B cell (primary cell): ENCODE measurements at regions of chr6 and their contacts with region 1.

Region 1: DNA sequence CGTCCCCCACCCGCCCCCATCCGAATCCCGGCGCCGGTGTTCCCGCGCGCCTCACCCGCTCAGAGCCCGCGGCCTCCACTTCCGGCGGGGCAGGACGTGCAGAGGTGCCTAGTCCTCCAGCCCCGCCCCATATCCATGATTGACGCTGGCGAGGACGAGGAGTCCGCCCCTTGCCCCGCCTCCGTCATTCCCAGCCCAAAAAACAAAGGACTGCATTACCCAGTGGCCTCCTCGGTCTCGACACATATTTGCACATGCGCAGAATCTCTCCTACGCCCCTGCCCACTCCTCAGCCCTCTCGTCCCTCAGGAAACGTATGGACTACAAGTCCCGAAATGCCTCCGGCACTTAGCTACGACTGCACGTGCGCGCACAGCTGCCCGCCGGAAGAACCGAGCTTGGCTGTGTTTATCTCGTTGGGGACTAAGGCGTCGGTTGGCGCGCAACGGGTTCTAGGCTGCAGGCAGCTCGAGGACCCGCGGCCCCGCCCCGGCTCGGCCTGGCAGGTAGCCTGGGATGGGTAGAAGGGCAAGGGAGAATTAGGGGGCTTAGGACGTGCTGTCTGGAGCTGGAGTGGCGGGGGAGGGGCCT is at the starts of genes KLHDC3 and MEA1:
- DNase-seq: peak; percentile 99
- ATAC-seq: peak; percentile 97
- H3K4me3 ChIP-seq: peak within 1 kb of the TSS; percentile 61 to 79 (median 70)
- H3K4me3 Mint-ChIP-seq: peak within 1 kb of the TSS; percentile 91
- H3K27ac ChIP-seq: peak within 1 kb of the TSS; percentile 35 to 69
- H3K27ac Mint-ChIP-seq: peak within 1 kb of the TSS; percentile 96
- H3K4me1 ChIP-seq: peaks cover 20 to 23% of the 10 kb centered on the region in 2 donors
- H3K4me1 Mint-ChIP-seq: peaks cover 50% of the 10 kb centered on the region
- H3K27me3 ChIP-seq: no peaks in the 10 kb centered on the region
- H3K27me3 Mint-ChIP-seq: no peaks in the 10 kb centered on the region
- CTCF ChIP-seq: no peak
- total RNA-seq, gene KLHDC3: 50.7 and 52.2 TPM in 2 replicates
- total RNA-seq, gene MEA1: 32.5 and 35.7 TPM in 2 replicates

Region 2: DNA sequence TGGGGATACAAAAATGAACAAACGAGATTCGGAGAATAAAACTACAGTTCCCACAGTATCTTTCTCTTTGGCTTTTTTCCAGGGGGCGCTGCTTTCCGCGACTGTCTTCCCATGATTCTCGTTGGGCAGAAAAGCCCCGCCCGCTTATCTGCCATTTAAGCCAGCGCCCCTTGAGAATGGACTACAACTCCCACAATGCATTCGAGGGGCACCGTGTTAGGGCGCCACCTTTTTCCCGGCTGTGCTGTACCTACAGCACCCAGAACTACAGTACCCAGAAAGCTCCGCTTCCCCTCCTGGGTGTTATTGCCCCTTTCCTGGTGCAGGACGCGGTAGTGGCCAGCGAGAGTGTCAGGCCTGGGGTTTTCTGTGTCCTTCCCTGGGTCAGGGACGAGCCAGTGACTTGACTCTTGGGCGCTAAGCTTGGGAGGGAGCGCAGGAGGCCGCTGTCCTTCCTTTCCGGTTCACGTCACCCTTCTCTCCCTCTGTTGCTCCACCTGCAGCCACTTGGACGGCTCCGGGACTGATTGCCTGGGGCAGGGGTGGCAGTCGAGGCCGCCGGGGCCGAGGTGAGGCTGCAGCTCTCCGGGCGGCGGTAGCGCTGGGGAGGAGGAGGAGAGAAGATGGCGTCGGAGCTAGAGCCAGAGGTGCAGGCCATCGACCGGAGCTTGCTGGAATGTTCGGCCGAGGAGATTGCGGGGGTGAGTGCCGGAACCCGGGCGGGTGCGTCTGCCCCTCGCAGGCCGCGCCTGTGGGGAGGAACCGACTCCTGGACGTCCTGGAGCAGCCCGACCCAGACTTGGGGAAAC is 450.0 kb before region 1 on chr6 and contains the start of gene UBR2:
- CTCF ChIA-PET with region 1: interaction called, 3 read pairs
- POLR2A ChIA-PET with region 1: interaction called, 3 read pairs
- intact Hi-C with region 1: loop called (anchors 1 kb)
- DNase-seq: peak; percentile 95
- ATAC-seq: peak; percentile 96
- H3K4me3 ChIP-seq: peak within 1 kb of the TSS; percentile 78 to 98 (median 91)
- H3K4me3 Mint-ChIP-seq: peak within 1 kb of the TSS; percentile 98
- H3K27ac ChIP-seq: peak within 1 kb of the TSS; percentile 90 to 91
- H3K27ac Mint-ChIP-seq: peak within 1 kb of the TSS; percentile 98
- H3K4me1 ChIP-seq: peaks cover 19 to 25% of the 10 kb centered on the region in 2 donors
- H3K4me1 Mint-ChIP-seq: peaks cover 36% of the 10 kb centered on the region
- H3K27me3 ChIP-seq: no peaks in the 10 kb centered on the region
- H3K27me3 Mint-ChIP-seq: no peaks in the 10 kb centered on the region
- CTCF ChIP-seq: peak; percentile 41
- total RNA-seq, gene UBR2: 56.2 and 61.5 TPM in 2 replicates

Region 3: GRCh38 chr6:42796171-42796570 is 217.8 kb before region 1 on chr6:
- CTCF ChIA-PET with region 1: no interaction called
- POLR2A ChIA-PET with region 1: no interaction called
- intact Hi-C with region 1: no loop called
- DNase-seq: no peak
- ATAC-seq: no peak
- H3K4me3 ChIP-seq: no peak overlapping the region
- H3K4me3 Mint-ChIP-seq: no peak overlapping the region
- H3K27ac ChIP-seq: no peak overlapping the region
- H3K27ac Mint-ChIP-seq: peak overlapping the region; percentile 11
- H3K4me1 ChIP-seq: peaks cover 0 to 3% of the 10 kb centered on the region in 2 donors
- H3K4me1 Mint-ChIP-seq: peaks cover 16% of the 10 kb centered on the region
- H3K27me3 ChIP-seq: no peaks in the 10 kb centered on the region
- H3K27me3 Mint-ChIP-seq: no peaks in the 10 kb centered on the region
- CTCF ChIP-seq: no peak

Region 4: DNA sequence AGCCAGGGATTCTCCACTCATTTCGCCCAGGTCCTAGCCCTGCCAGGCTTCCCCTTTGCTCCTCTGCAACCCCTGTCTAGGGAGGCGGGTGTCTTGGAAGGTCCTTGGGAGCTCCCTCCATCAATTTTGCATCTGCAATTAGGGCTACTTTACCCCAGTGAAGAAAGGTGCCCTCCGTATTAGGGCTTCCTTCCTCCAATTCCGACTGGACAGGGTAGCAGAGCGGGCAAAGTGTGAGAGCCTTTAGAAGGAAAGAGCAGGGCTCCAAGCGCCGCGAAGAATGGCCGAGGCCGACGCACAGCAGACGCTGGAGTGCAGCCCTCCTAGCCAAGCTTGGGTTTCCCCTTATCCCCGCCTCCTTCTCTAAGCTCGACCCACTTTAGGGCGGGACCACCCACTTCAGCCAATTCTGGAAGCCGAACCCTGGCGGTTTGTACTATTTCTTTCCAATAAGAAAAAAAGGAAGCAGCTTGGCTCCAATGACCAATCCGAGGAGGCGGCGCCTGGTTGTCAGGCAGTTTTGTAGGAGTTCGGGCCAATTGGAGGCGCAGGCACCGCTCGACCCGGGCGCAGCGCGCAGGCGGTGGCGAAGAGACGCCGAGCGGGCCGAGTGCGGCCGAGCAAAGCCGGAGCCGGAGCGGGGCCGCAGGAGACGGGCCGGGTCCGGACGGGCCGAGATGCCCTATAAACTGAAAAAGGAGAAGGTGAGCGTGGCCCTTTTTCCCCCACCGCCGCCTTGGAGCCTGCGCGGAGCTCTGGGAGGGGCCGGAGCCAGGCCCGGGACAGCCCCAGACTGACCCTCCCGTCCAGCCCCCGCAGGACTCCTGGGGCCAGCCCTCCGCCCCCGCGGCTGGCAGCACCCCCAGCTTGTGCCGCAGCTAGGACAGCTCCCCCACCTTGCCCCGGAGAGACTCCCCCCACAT is 29.7 kb before region 1 on chr6 and contains the start of gene PPP2R5D:
- CTCF ChIA-PET with region 1: interaction called, 6 read pairs
- POLR2A ChIA-PET with region 1: interaction called, 14 read pairs
- intact Hi-C with region 1: loop called (anchors 1 kb)
- DNase-seq: peak; percentile 98
- ATAC-seq: peak; percentile 95
- H3K4me3 ChIP-seq: peak within 1 kb of the TSS; percentile 54 to 96 (median 91)
- H3K4me3 Mint-ChIP-seq: peak within 1 kb of the TSS; percentile 89
- H3K27ac ChIP-seq: peak within 1 kb of the TSS; percentile 74 to 86
- H3K27ac Mint-ChIP-seq: peak within 1 kb of the TSS; percentile 95
- H3K4me1 ChIP-seq: peaks cover 18 to 30% of the 10 kb centered on the region in 2 donors
- H3K4me1 Mint-ChIP-seq: peaks cover 49% of the 10 kb centered on the region
- H3K27me3 ChIP-seq: no peaks in the 10 kb centered on the region
- H3K27me3 Mint-ChIP-seq: no peaks in the 10 kb centered on the region
- CTCF ChIP-seq: no peak
- total RNA-seq, gene PPP2R5D: 23.6 and 26.3 TPM in 2 replicates

Region 5: DNA sequence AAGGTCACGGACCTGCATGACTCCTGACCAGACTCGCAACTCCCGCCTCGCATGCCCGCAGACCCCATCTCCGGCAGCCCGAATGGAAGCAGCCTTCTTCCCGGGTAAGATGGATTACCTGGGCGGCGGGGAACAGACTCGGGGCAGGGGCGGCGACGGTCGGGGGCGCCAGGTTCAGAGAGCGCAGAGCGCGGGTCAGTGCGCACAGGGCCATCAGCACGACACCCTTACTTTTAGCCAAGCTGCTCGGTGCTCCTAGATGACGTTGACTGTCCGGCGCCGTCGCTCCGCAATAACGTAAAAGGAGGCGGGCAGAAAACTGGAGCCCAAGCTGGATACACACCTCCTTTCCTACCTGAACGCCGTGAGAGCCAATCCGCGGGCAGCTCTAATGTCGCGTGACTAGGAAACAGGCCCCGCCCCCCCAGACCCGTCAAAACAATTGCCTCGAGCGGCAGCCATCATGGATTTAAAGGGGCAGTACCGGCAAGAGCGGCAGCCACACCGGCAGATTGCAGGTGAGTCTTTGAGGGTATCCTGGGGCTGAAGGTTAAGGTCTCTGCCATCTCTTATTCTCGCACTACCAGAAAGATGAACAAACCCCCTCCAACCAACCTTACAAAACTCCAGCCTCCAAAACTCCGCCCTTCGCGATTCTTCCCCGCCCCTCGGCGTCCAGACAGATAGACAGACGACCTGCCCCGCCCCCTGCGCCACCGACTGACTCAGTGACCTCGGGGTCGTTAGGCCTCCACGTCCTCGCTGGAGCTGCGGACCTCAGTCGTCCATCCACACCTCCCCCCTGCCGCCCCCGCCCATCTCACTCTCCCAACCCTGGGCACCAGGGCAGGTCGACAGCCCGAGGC is 45.5 kb after region 1 on chr6 and contains the starts of genes KLC4 and MRPL2:
- CTCF ChIA-PET with region 1: interaction called, 5 read pairs
- POLR2A ChIA-PET with region 1: interaction called, 9 read pairs
- intact Hi-C with region 1: loop called (anchors 1 kb)
- DNase-seq: peak; percentile 98
- ATAC-seq: peak; percentile 96
- H3K4me3 ChIP-seq: peak within 1 kb of the TSS; percentile 76 to 96 (median 89)
- H3K4me3 Mint-ChIP-seq: peak within 1 kb of the TSS; percentile 99
- H3K27ac ChIP-seq: peak within 1 kb of the TSS; percentile 76 to 86
- H3K27ac Mint-ChIP-seq: peak within 1 kb of the TSS; percentile 100
- H3K4me1 ChIP-seq: peaks cover 17 to 23% of the 10 kb centered on the region in 2 donors
- H3K4me1 Mint-ChIP-seq: peaks cover 38% of the 10 kb centered on the region
- H3K27me3 ChIP-seq: no peaks in the 10 kb centered on the region
- H3K27me3 Mint-ChIP-seq: no peaks in the 10 kb centered on the region
- CTCF ChIP-seq: no peak
- total RNA-seq, gene KLC4: 52.7 and 61.9 TPM in 2 replicates
- total RNA-seq, gene MRPL2: 43.8 and 45.6 TPM in 2 replicates

Region 6: GRCh38 chr6:43247113-43247999 is 233.4 kb after region 1 on chr6:
- CTCF ChIA-PET with region 1: no interaction called
- POLR2A ChIA-PET with region 1: no interaction called
- intact Hi-C with region 1: loop called (anchors 1 kb)
- DNase-seq: peak; percentile 87
- ATAC-seq: peak; percentile 96
- H3K4me3 ChIP-seq: peak overlapping the region; percentile 51 to 85 (median 72)
- H3K4me3 Mint-ChIP-seq: no peak overlapping the region
- H3K27ac ChIP-seq: peak overlapping the region; percentile 51 to 65
- H3K27ac Mint-ChIP-seq: peak overlapping the region; percentile 87
- H3K4me1 ChIP-seq: peaks cover 19 to 21% of the 10 kb centered on the region in 2 donors
- H3K4me1 Mint-ChIP-seq: peaks cover 22% of the 10 kb centered on the region
- H3K27me3 ChIP-seq: peaks cover 0 to 62% (median 38%) of the 10 kb centered on the region in 4 experiments
- H3K27me3 Mint-ChIP-seq: peaks cover 29% of the 10 kb centered on the region
- CTCF ChIP-seq: no peak

Region 7: GRCh38 chr6:43629505-43630300 is 615.8 kb after region 1 on chr6:
- CTCF ChIA-PET with region 1: no interaction called
- POLR2A ChIA-PET with region 1: no interaction called
- intact Hi-C with region 1: loop called (anchors 2 kb)
- DNase-seq: peak; percentile 95
- ATAC-seq: peak; percentile 66
- H3K4me3 ChIP-seq: peak overlapping the region; percentile 64 to 96 (median 90)
- H3K4me3 Mint-ChIP-seq: peak overlapping the region; percentile 100
- H3K27ac ChIP-seq: peak overlapping the region; percentile 70 to 84
- H3K27ac Mint-ChIP-seq: peak overlapping the region; percentile 99
- H3K4me1 ChIP-seq: peaks cover 22 to 33% of the 10 kb centered on the region in 2 donors
- H3K4me1 Mint-ChIP-seq: peaks cover 32% of the 10 kb centered on the region
- H3K27me3 ChIP-seq: no peaks in the 10 kb centered on the region
- H3K27me3 Mint-ChIP-seq: no peaks in the 10 kb centered on the region
- CTCF ChIP-seq: no peak